ENCODE measurements at regions of chr5 and their contacts with region 1.

Region 1: DNA sequence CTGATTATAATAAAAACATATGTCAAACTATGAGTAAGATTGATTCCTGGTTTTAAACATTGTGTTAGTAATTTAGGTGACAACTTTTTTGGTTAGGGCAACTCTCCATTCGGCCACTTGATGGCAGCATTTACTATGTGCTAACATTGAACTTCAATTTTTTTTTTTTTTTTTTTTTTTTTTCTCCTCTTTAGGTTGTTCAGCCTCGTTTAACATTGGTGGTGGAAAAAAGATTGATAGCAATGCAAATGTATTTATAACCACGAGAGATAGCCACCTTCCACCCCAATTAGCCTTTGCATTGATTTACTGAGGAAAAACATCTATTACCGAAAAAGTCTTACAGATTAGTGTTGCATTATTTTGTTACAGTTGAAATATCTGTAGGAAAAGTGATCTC is 159.1 kb downstream of the CSNK1G3 start:
- ATAC-seq: peak in 6 of 8 experiments; percentile 19 to 62 (median 42)
- H3K4me3 ChIP-seq: no peak overlapping the region
- H3K27ac ChIP-seq: no peak overlapping the region
- H3K4me1 ChIP-seq: peaks cover 17 to 21% of the 10 kb centered on the region in 2 donors

Region 2: GRCh38 chr5:124748687-124749594 is 1077.9 kb after region 1 on chr5:
- in situ Hi-C with region 1: loop called in 2 of 9 experiments (anchors 25 kb)
- ATAC-seq: peak; percentile 61 to 88 (median 84)
- H3K4me3 ChIP-seq: peak overlapping the region; percentile 53 to 68 (median 59)
- H3K27ac ChIP-seq: peak overlapping the region; percentile 88 to 92
- H3K4me1 ChIP-seq: peaks cover 0 to 18% of the 10 kb centered on the region in 2 donors

Measured in motor neuron (in vitro differentiated cells).